GM13977 (cell line): ENCODE measurements at regions of chr9 and their contacts with region 1.

Region 1: DNA sequence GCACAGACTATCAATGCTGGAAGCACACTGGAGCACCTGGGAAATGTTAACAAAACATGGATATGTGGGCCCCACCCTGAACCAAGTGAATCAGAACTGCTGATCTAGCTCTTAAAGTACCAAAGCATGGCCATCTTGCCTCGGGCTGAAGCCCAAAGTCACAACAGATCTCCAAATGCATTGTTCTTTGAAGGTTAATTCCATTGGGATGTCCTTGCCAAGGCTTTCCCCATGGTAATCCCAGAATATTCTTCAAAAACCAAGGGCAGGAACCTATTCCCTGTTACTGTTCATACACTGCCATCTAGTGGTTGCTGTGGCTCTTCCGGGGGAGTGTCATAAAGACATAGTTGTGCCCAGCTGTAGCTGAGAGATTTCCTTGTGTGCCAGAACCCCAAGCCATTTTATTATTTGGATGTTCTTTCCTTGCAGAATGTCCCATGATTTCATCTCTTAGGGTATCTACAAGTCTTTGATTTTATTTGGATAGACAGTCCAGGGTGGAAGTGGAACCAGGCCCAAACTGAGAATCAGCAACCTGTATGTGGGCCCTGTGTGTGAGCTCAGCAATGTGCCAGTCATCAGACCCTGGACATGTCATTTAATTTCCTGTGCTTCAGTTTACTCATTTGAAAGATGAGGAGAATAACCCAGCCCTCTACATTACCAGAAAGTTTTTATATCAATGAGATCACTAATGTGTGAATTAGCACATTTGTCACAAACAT is 290.0 kb downstream of the ACTL7B start:
- DNase-seq: peak; percentile 49
- CTCF ChIP-seq: peak; percentile 79

Region 2: DNA sequence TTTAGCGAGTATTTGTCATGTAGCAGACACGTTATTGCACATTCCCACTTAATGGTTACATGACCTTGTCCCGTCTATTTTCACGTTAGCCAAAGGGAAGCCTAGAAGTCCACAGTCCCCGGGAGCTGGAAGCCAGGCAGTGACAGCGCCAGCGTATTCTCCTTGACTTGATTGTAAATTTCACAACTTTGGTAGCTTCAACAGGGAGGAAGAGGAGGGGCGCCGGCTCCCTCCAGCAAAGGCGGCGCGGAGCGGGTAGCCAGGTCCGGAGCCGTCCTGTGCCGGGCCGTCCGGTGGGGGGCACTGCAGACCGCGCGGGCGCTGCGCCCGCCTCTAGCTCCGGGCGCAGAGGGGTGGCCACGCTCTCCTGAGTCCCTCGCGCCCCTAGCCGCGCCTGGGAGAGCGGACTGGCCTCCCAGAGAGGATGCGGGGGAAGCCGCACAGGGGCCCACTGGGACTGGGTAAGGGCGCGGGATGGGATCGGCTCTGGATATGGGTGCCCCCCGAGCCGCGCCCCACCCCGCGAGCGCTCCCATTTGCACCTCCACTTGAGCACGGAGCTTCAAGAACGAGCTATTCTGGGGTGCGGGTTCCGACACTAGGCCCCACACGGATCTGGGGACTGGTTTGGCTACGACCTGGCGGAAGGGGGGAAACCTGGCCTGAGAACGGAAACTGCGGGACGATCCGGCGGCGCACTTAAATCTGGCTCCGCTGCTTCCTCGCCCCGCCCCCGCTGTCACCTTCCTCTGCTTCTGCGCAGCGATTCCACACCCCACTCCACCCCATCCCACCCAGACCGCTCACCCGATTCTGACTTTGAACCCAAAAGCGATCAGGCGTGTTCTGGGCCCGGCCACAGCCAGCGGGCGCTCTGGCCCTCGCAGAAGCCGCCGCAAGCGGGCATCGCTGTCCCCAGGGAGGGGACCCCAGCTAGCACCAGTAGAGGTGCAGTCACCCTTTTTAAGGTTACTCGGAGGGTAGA is 1100.1 kb before region 1 on chr9:
- in situ Hi-C with region 1: loop called (anchors 25 kb)
- DNase-seq: peak; percentile 81
- CTCF ChIP-seq: peak; percentile 66

Region 3: GRCh38 chr9:108761655-108762347 is 196.0 kb after region 1 on chr9:
- in situ Hi-C with region 1: loop called (anchors 25 kb)
- DNase-seq: peak; percentile 67
- CTCF ChIP-seq: peak; percentile 82